Prostate gland (tissue), 2 donors: ENCODE measurements at regions of chr16 and their contacts with region 1.

Region 1: DNA sequence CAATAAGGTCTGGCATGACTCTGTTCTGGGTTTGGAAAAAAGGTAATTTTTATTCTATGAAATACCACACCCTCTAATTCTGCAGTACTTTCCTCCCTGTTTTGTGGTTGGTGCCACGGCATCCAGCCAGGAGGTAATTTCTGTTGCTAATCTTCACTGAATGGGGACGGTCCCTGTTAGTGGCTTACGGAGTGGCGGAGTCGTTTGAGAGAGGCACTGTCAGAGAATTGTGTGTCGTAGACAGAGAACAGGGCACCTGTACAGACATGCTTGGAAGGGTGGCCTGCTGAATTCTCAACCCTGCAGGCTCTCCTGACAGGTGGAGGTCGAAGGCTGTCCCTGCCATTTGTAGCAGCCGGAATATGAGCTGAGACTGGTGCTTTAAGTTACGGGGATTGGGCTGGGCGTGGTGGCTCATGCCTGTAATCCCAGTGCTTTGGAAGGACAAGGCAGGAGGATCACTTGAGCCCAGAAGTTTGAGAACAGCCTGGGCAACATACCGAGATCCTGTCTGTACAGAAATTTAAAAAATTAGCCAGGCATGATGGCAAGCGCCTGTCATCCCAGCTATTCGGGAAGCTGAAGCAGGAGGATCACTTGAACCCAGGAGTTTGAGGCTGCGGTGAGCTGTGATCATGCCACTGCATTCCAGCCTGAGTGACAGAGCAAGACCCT is 33.2 kb downstream of the EEF2K start:
- DNase-seq: no peak
- H3K4me3 ChIP-seq: no peak overlapping the region
- H3K27ac ChIP-seq: peak overlapping the region; percentile 58 to 69
- H3K4me1 ChIP-seq: peaks cover 13% of the 10 kb centered on the region
- H3K27me3 ChIP-seq: no peaks in the 10 kb centered on the region
- CTCF ChIP-seq: no peak
- POLR2A ChIP-seq: no peak

Region 2: GRCh38 chr16:22001591-22001990 is 237.7 kb before region 1 on chr16:
- intact Hi-C with region 1: no loop called
- DNase-seq: no peak
- H3K4me3 ChIP-seq: no peak overlapping the region
- H3K27ac ChIP-seq: no peak overlapping the region
- H3K4me1 ChIP-seq: no peaks in the 10 kb centered on the region
- H3K27me3 ChIP-seq: no peaks in the 10 kb centered on the region
- CTCF ChIP-seq: no peak
- POLR2A ChIP-seq: no peak

Region 3: DNA sequence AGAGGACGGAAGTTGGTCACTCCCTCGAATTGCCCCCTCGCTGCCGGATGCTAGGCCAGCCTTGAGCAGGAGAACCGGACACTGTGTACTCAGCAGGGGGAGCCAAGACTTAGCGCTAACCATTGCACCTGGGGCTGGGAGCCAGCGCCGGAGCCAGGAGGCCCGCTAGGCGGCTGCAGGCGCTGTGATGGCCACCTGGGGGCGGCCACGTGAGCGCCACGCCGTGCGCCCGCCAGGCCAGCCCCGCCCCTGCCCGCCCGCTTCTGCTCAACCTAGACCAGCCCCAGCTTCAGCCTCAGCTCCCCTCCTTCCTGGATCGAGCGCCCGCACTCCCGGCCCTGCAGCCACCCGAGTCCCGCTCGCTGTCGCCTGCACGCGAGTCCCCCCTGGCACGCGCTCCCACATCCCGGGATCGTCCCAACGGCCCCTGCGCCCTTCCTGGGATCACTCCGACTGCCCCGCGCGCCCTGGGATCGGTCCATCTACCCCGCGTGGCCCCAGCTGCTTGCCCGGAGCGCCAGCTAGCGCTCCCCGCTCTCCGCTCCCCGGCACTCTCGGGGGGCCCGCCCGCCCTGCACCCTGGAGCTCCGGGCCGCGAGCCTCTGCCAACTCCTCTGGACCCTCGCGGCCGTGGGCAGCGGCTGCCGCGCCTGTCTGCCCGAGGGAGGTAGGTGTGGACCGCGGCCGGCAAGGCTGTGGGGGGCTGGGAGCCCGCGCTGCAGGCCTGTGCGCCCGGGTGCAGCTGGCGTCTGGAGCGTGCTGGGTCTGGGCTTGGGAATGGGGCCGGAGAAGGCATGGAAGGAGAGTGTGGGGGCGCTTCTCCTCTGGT is 33.0 kb before region 1 on chr16 and contains the start of gene EEF2K:
- intact Hi-C with region 1: loop called (anchors 2 kb)
- DNase-seq: peak; percentile 94
- H3K4me3 ChIP-seq: peak within 1 kb of the TSS; percentile 78 to 97
- H3K27ac ChIP-seq: peak within 1 kb of the TSS; percentile 90 to 91
- H3K4me1 ChIP-seq: peaks cover 15% of the 10 kb centered on the region
- H3K27me3 ChIP-seq: no peaks in the 10 kb centered on the region
- CTCF ChIP-seq: peak; percentile 78 to 100 (median 94)
- POLR2A ChIP-seq: peak; percentile 74
- total RNA-seq, gene EEF2K: 58.2 to 75.1 TPM